ENCODE measurements at regions of chr7 and their contacts with region 1.

Region 1: GRCh38 chr7:94449148-94449725 is 54.5 kb downstream of the COL1A2 start:
- DNase-seq: peak in 1 of 35 experiments; percentile 47
- ATAC-seq: peak in 1 of 4 experiments; percentile 51
- H3K4me3 ChIP-seq: no peak overlapping the region
- H3K4me3 Mint-ChIP-seq: no peak overlapping the region
- H3K27ac ChIP-seq: no peak overlapping the region
- H3K27ac Mint-ChIP-seq: no peak overlapping the region
- H3K4me1 ChIP-seq: no peaks in the 10 kb centered on the region
- H3K4me1 Mint-ChIP-seq: no peaks in the 10 kb centered on the region
- H3K27me3 ChIP-seq: no peaks in the 10 kb centered on the region
- H3K27me3 Mint-ChIP-seq: peaks cover 3 to 15% of the 10 kb centered on the region in 2 donors

Region 2: GRCh38 chr7:93778384-93778783 is 670.9 kb before region 1 on chr7:
- CTCF ChIA-PET with region 1: no interaction called
- POLR2A ChIA-PET with region 1: no interaction called
- DNase-seq: no peak
- ATAC-seq: no peak
- H3K4me3 ChIP-seq: no peak overlapping the region
- H3K4me3 Mint-ChIP-seq: no peak overlapping the region
- H3K27ac ChIP-seq: no peak overlapping the region
- H3K27ac Mint-ChIP-seq: no peak overlapping the region
- H3K4me1 ChIP-seq: no peaks in the 10 kb centered on the region
- H3K4me1 Mint-ChIP-seq: no peaks in the 10 kb centered on the region
- H3K27me3 ChIP-seq: no peaks in the 10 kb centered on the region
- H3K27me3 Mint-ChIP-seq: no peaks in the 10 kb centered on the region

Region 3: GRCh38 chr7:94414481-94414880 is 34.8 kb before region 1 on chr7:
- CTCF ChIA-PET with region 1: no interaction called
- POLR2A ChIA-PET with region 1: no interaction called
- DNase-seq: no peak
- ATAC-seq: no peak
- H3K4me3 ChIP-seq: no peak overlapping the region
- H3K4me3 Mint-ChIP-seq: no peak overlapping the region
- H3K27ac ChIP-seq: no peak overlapping the region
- H3K27ac Mint-ChIP-seq: no peak overlapping the region
- H3K4me1 ChIP-seq: no peaks in the 10 kb centered on the region
- H3K4me1 Mint-ChIP-seq: no peaks in the 10 kb centered on the region
- H3K27me3 ChIP-seq: peaks cover 0 to 5% of the 10 kb centered on the region in 2 experiments
- H3K27me3 Mint-ChIP-seq: peaks cover 0 to 3% of the 10 kb centered on the region in 2 donors

Region 4: DNA sequence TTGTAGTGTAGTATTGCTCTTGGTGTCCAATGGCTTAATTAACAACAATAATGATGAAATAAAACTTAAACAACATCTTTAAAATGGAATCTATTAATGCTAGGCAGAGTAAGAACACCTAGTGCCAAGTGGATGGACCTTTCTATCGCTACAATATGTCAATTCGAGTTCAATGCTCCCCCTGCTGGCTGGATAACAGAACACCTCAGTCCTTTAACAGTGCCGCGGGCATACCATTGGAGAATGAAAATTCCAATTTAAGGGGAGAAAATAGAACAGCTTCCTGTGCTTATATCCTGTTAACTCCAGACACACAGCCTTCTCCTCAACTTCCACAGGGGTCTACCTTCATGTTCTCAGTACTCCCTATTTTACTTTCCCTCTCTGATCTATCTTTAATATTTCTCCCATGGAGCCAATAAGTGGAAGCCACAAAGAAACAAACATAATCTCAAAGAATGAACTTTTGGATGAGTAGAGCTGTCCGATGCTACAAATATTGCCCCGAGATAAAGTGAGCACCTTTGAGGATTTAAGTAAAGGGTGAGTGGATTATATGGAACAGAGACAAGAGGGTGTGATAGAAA is 13.1 kb before region 1 on chr7:
- CTCF ChIA-PET with region 1: interaction called, 11 to 12 read pairs
- POLR2A ChIA-PET with region 1: no interaction called
- DNase-seq: peak in 32 of 35 experiments; percentile 3 to 70 (median 28)
- ATAC-seq: peak in 2 of 4 experiments; percentile 62 to 67
- H3K4me3 ChIP-seq: no peak overlapping the region
- H3K4me3 Mint-ChIP-seq: no peak overlapping the region
- H3K27ac ChIP-seq: no peak overlapping the region
- H3K27ac Mint-ChIP-seq: no peak overlapping the region
- H3K4me1 ChIP-seq: no peaks in the 10 kb centered on the region
- H3K4me1 Mint-ChIP-seq: peaks cover 0 to 4% (median 3%) of the 10 kb centered on the region in 3 donors
- H3K27me3 ChIP-seq: peaks cover 0 to 5% of the 10 kb centered on the region in 2 experiments
- H3K27me3 Mint-ChIP-seq: peaks cover 19 to 24% of the 10 kb centered on the region in 2 donors

Region 5: DNA sequence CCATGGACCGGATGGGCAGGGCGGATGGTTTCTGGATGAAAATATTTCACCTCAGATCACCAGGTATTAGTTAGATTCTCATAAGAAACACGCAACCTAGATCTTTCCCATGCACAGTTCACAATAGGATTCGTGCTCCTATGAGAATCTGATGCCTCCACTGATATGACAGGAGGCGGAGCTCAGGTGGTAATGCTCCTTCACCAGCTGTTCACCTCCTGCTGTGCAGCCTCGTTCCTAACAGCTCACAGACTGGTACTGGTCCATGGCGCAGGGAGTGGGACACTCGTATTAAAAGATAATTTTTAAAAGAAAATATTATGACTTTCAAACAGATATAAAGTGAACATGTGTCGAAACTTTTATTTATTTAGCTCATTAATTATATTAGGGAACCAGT is 53.9 kb after region 1 on chr7:
- CTCF ChIA-PET with region 1: no interaction called
- POLR2A ChIA-PET with region 1: no interaction called
- DNase-seq: no peak
- ATAC-seq: no peak
- H3K4me3 ChIP-seq: no peak overlapping the region
- H3K4me3 Mint-ChIP-seq: no peak overlapping the region
- H3K27ac ChIP-seq: no peak overlapping the region
- H3K27ac Mint-ChIP-seq: no peak overlapping the region
- H3K4me1 ChIP-seq: no peaks in the 10 kb centered on the region
- H3K4me1 Mint-ChIP-seq: peaks cover 0 to 1% (median 0%) of the 10 kb centered on the region in 3 donors
- H3K27me3 ChIP-seq: no peaks in the 10 kb centered on the region
- H3K27me3 Mint-ChIP-seq: peaks cover 10 to 16% of the 10 kb centered on the region in 2 donors

Region 6: DNA sequence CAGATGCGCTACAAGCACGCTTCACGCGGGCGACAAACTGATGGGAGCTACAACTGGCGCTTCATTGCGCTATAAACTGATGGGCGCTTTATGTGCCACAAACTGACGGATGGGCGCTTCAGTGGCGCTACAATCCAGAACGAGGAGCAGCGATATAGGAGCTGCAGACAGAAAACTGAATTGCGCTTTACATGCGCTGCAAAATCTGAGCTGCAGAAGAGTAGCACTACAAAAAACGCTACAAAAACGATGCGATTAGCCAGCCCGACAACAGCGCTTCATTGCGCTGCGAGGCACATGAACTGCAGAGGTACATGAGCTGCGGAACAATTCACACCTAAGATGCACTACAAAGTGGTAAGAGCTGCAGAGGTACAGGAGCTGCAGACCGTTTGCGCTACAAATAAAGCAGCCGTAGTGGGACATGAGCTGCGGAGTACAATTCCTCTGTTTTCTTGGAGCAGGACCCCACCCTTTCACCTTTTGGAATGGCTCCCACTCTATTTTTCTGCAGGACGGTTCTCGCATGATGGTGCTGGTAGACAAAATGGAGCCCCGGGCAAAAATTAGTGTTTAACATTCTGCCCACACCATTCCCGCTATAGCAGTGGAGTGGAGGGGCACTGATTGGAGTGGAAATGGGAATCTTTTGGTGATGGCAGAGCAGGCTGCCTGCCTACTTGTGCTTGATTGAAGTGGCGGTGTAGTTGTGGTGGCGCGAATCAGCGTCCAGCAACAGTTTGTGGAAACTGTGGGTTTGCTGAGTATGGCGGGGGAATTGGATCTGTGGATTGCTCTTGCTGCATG is 207.9 kb after region 1 on chr7:
- CTCF ChIA-PET with region 1: interaction called in 1 of 2 experiments, 12 read pairs
- POLR2A ChIA-PET with region 1: no interaction called
- DNase-seq: peak in 23 of 35 experiments; percentile 7 to 58 (median 17)
- ATAC-seq: no peak
- H3K4me3 ChIP-seq: peak overlapping the region; percentile 59 to 65
- H3K4me3 Mint-ChIP-seq: peak overlapping the region; percentile 82 to 88 (median 83)
- H3K27ac ChIP-seq: peak overlapping the region; percentile 29
- H3K27ac Mint-ChIP-seq: peak overlapping the region; percentile 47 to 59
- H3K4me1 ChIP-seq: peaks cover 11 to 28% of the 10 kb centered on the region in 2 experiments
- H3K4me1 Mint-ChIP-seq: peaks cover 17 to 23% (median 21%) of the 10 kb centered on the region in 3 donors
- H3K27me3 ChIP-seq: peaks cover 13 to 28% of the 10 kb centered on the region in 2 experiments
- H3K27me3 Mint-ChIP-seq: peaks cover 9 to 17% of the 10 kb centered on the region in 2 donors

Region 7: GRCh38 chr7:94748371-94748770 is 299.1 kb after region 1 on chr7:
- CTCF ChIA-PET with region 1: no interaction called
- POLR2A ChIA-PET with region 1: no interaction called
- DNase-seq: no peak
- ATAC-seq: no peak
- H3K4me3 ChIP-seq: no peak overlapping the region
- H3K4me3 Mint-ChIP-seq: no peak overlapping the region
- H3K27ac ChIP-seq: no peak overlapping the region
- H3K27ac Mint-ChIP-seq: no peak overlapping the region
- H3K4me1 ChIP-seq: no peaks in the 10 kb centered on the region
- H3K4me1 Mint-ChIP-seq: no peaks in the 10 kb centered on the region
- H3K27me3 ChIP-seq: no peaks in the 10 kb centered on the region
- H3K27me3 Mint-ChIP-seq: peaks cover 1 to 4% of the 10 kb centered on the region in 2 donors

Region 8: GRCh38 chr7:95246831-95247370 is 797.7 kb after region 1 on chr7:
- CTCF ChIA-PET with region 1: interaction called in 1 of 2 experiments, 17 read pairs
- POLR2A ChIA-PET with region 1: no interaction called
- DNase-seq: peak in 3 of 35 experiments; percentile 0 to 39 (median 2)
- ATAC-seq: no peak
- H3K4me3 ChIP-seq: no peak overlapping the region
- H3K4me3 Mint-ChIP-seq: no peak overlapping the region
- H3K27ac ChIP-seq: no peak overlapping the region
- H3K27ac Mint-ChIP-seq: no peak overlapping the region
- H3K4me1 ChIP-seq: no peaks in the 10 kb centered on the region
- H3K4me1 Mint-ChIP-seq: no peaks in the 10 kb centered on the region
- H3K27me3 ChIP-seq: no peaks in the 10 kb centered on the region
- H3K27me3 Mint-ChIP-seq: peaks cover 0 to 13% of the 10 kb centered on the region in 2 donors

Region 9: DNA sequence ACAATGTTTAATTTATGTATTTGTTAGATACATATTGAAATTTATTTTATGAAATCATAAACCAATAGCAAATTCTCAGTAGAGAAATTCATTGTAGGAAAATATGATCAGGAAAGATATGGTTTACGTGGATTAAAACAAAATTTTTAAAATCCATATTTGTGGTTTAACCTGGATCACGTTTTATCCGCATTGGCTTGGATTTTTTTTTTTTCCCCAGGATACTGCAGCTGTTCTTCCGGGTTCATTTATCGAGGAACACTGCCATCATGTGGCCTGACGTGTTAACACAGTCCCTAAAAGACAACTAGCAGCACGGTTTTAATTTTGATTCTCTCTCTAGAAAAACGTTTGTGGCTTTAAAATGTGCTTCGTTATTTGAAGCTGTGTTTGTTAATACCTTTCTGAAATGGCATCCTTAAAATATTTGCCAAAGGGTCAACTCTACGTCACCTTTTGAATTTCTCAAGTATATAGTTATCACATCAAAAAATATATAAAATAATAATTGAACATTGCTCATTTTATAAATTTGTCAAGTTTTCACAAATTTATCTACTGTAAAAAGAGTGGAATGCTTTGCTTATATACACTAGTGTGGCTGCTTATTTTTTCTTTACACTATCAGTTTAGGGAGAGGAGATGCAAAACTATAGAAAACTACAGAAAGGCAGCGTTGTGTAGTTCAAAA is 1027.8 kb after region 1 on chr7:
- CTCF ChIA-PET with region 1: interaction called, 48 to 146 read pairs
- POLR2A ChIA-PET with region 1: no interaction called
- DNase-seq: peak in 32 of 35 experiments; percentile 8 to 75 (median 34)
- ATAC-seq: peak in 3 of 4 experiments; percentile 45 to 65 (median 60)
- H3K4me3 ChIP-seq: no peak overlapping the region
- H3K4me3 Mint-ChIP-seq: no peak overlapping the region
- H3K27ac ChIP-seq: no peak overlapping the region
- H3K27ac Mint-ChIP-seq: no peak overlapping the region
- H3K4me1 ChIP-seq: no peaks in the 10 kb centered on the region
- H3K4me1 Mint-ChIP-seq: no peaks in the 10 kb centered on the region
- H3K27me3 ChIP-seq: no peaks in the 10 kb centered on the region
- H3K27me3 Mint-ChIP-seq: peaks cover 0 to 1% of the 10 kb centered on the region in 2 donors

Measured in T-cell (primary cell).